RWPE1 (cell line): ENCODE measurements at regions of chr14 and their contacts with region 1.

Region 1: DNA sequence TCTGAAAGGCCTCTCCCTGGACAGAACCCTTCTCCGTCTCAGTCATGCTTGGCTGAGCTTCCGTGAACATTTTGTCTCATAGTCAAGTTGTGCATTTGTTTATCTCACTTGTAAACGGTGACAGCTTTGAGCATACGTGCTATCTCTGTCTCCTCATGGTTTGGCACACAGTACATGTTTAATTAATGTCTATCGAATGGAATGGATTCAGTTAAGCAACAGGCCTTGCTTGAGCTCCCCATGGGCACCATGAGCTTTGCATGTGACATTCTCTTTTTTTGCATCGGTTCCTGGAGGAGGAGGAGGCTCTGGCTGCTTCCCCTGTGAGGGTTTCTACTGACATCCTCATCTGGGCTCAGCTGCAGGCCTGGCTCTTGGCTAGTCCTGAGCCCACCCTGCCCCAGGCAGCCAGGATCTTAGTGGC is 80.0 kb downstream of the PRIMA1 start:
- DNase-seq: no peak
- H3K27ac ChIP-seq: no peak overlapping the region
- CTCF ChIP-seq: no peak

Region 2: DNA sequence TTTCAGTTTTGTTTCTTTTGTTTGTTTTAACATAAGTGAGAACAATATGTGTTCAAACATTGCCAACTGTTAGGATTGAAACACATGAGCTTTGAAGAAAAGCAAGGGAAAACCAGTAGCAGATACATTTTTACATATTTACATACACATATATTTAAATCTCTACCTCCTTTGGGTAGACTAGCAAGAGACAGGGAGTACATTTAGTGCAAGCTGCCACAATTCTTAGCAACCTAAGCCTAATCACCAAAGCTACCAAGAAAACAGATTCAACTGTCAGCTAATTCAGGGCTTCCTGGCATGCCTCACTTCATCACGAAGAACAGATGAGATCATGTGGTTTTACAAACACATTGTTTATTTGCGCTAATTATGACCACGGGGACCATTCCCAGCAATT is 63.1 kb before region 1 on chr14:
- CTCF ChIA-PET with region 1: no interaction called
- POLR2A ChIA-PET with region 1: interaction called, 14 read pairs
- DNase-seq: no peak
- H3K27ac ChIP-seq: no peak overlapping the region
- CTCF ChIP-seq: no peak